Activated CD4-positive, alpha-beta memory T cell treated with anti-CD3 and anti-CD28 coated beads for 36 hours (primary cell): ENCODE measurements at regions of chr3 and their contacts with region 1.

Region 1: DNA sequence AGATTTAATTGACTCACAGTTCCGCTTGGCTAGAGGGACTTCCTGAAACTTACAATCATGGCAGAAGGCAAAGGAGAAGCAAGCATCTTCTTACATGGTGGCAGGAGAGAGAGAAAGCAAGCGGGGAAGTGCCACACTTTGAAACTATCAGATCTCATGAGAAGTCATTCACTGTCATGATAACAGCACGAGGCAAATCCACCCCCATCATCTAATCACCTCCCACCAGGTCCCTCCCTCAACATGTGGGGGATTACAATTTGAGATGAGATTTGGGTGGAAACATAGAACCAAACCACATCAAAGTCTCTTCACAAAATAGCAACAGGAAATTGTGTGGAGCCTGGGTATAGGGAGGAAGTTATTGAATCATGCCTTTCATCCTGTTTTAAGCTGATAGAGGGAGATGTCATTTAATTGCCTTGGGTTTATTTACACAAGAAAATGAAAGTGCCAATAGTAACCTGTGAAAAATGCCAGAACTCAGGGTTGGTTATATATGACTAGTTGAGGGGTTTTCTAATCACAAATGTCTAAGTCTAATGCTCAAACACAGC is 624.8 kb upstream of the LMCD1 start:
- DNase-seq: peak; percentile 40
- H3K4me3 Mint-ChIP-seq: peak overlapping the region; percentile 13
- H3K27ac Mint-ChIP-seq: peak overlapping the region; percentile 36
- H3K4me1 Mint-ChIP-seq: peaks cover 25% of the 10 kb centered on the region
- H3K27me3 Mint-ChIP-seq: no peaks in the 10 kb centered on the region

Region 2: DNA sequence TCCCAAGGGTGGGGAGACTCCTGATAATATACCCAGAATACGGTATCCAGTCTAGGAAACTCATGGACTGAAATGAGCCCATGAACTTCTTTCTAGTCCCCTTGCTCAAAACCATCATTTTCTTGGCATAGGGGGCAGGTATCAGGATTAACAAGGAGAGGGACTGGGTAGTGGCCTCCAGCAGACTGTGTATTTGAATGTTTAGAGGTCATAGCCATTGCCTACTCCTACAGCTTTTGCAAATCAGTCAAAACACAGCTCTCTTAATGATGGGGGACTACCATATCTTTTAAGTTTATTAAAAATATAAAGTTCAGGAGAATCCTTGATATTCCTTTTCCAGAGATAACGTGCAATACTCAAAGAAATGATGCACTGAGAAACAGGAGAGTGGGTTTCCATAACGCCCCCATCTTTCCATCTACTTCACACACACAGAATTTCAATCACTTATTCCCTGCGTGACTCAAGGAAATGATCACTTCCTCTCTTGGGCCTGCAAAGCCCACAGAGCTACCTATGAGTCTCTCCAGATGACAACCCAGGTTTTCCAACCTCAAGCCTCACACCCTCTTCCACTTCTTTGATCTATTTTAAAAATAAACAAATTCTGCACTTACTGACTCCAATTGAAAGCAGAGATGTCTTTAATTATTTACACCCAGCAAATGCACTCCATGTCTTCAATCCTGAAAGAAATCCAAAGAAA is 40.8 kb after region 1 on chr3:
- CTCF ChIA-PET with region 1: no interaction called
- POLR2A ChIA-PET with region 1: no interaction called
- intact Hi-C with region 1: loop called (anchors 2 kb)
- DNase-seq: peak; percentile 23
- H3K4me3 Mint-ChIP-seq: no peak overlapping the region
- H3K27ac Mint-ChIP-seq: no peak overlapping the region
- H3K4me1 Mint-ChIP-seq: peaks cover 6% of the 10 kb centered on the region
- H3K27me3 Mint-ChIP-seq: no peaks in the 10 kb centered on the region

Region 3: GRCh38 chr3:8001712-8002111 is 124.9 kb after region 1 on chr3:
- CTCF ChIA-PET with region 1: no interaction called
- POLR2A ChIA-PET with region 1: no interaction called
- intact Hi-C with region 1: no loop called
- DNase-seq: no peak
- H3K4me3 Mint-ChIP-seq: no peak overlapping the region
- H3K27ac Mint-ChIP-seq: no peak overlapping the region
- H3K4me1 Mint-ChIP-seq: no peaks in the 10 kb centered on the region
- H3K27me3 Mint-ChIP-seq: no peaks in the 10 kb centered on the region